Activated T-helper 1 cell treated with anti-CD3 and anti-CD28 coated beads, Interleukin-12 subunit alpha, Interleukin-12 subunit beta, Interleukin-2, Interleukin-4 antibody, amounts not matched to agents 30 ng/mL and 10 ng/mL and 1 ng/mL, durations not matched to agents 14 hours and 24 hours and 36 hours (primary cell): ENCODE measurements at regions of chr1 and their contacts with region 1.

Region 1: DNA sequence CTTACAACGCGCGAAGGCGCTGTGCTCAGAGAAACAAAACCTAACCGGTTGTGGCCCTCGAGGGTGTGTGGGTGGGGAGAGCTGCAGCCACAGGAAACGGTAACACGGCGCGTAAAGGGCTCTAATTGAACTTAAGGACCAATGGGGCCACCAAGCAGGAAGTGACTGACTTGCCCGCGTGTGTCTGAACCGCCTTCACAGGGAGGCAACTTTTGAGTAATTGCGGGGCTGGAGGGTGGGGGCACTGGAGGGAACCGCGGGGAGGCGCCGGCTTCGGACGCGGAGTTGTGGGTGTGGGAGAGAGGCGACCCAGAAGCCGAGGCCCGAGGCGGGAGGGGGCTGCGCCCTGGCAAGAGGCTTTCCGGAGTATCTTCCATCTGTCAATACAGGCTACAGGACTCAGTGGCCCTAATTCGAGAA is 577 bp upstream of the PNRC2 start:
- DNase-seq: peak; percentile 90
- H3K4me3 Mint-ChIP-seq: peak overlapping the region; percentile 99
- H3K27ac Mint-ChIP-seq: peak overlapping the region; percentile 100
- H3K4me1 Mint-ChIP-seq: peaks cover 67% of the 10 kb centered on the region
- H3K27me3 Mint-ChIP-seq: no peaks in the 10 kb centered on the region

Region 2: GRCh38 chr1:23800400-23801337 is 158.4 kb before region 1 on chr1 and contains the start of gene GALE:
- intact Hi-C with region 1: loop called (anchors 1 kb)
- DNase-seq: peak; percentile 93
- H3K4me3 Mint-ChIP-seq: peak within 1 kb of the TSS; percentile 97
- H3K27ac Mint-ChIP-seq: peak within 1 kb of the TSS; percentile 88
- H3K4me1 Mint-ChIP-seq: peaks cover 13% of the 10 kb centered on the region
- H3K27me3 Mint-ChIP-seq: peaks cover 2% of the 10 kb centered on the region
- total RNA-seq, gene GALE: 62.4 and 63.4 TPM in 2 replicates

Region 3: DNA sequence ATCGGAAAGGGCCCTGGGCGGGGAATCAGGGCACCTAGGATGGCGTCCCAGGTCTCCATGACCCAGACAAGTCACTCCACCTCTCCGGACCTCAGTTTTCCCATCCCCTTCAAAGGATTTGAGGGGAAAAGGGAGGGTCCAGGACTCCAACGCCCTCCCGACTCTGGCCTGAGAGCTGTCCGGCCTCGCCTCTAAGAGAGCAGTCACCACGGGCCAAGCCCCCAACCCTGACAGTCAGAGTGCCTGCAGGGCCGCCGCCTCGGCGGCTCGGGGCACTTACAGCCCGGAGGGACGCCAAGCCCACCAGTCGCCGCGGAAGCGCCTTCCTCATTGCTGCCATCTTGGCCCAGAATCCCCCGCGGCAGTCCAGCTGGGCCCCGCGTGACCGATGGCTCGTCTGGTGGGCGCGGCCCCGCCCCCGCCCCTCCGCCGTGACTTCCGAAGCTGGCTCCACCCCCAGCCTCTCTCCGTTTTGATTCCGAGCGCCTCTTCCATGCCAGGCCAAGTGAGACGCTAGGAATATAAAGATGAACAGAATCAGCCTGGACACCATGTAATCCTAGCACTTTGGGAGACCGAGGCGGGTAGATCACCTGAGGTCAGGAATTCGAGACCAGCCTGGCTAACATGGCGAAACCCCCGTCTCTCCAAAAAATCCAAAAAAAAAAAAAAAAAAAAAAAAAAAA is 133.8 kb before region 1 on chr1 and contains the start of gene HMGCL:
- intact Hi-C with region 1: loop called (anchors 1 kb)
- DNase-seq: peak; percentile 81
- H3K4me3 Mint-ChIP-seq: peak within 1 kb of the TSS; percentile 94
- H3K27ac Mint-ChIP-seq: peak within 1 kb of the TSS; percentile 89
- H3K4me1 Mint-ChIP-seq: peaks cover 15% of the 10 kb centered on the region
- H3K27me3 Mint-ChIP-seq: no peaks in the 10 kb centered on the region
- total RNA-seq, gene HMGCL: 18.5 and 19.9 TPM in 2 replicates

Region 4: DNA sequence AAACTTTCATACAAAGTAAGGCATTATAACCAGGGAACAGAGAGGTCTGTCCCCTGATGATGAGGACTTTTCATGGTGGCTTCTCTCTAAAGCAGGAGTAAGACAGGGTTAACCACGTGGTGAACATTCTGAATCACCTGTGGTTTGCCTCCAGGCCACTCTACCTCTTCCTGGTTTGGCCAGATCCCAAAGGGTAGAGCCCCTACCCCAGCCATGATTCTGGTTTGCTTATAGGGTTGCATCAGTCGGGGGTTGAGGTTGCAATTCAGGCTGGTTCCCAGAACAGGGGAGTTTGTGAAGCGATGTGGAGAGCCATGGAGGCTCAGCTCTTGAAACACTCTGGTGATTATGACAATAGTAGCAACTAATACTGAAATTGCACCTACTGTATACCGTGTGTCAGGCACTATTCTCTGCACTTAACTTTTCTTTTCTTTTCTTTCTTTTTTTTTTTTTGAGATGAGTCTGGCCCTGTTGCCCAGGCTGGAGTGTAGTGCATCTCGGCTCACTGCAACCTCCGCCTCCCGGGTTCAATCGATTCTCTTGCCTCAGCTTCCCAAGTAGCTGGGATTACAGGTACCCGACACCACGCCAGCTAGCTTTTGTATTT is 54.2 kb before region 1 on chr1:
- intact Hi-C with region 1: loop called (anchors 2 kb)
- DNase-seq: peak; percentile 17
- H3K4me3 Mint-ChIP-seq: no peak overlapping the region
- H3K27ac Mint-ChIP-seq: no peak overlapping the region
- H3K4me1 Mint-ChIP-seq: peaks cover 33% of the 10 kb centered on the region
- H3K27me3 Mint-ChIP-seq: peaks cover 49% of the 10 kb centered on the region

Region 5: GRCh38 chr1:23979878-23980724 is 21.1 kb after region 1 on chr1 and contains the start of gene SRSF10:
- intact Hi-C with region 1: loop called (anchors 1 kb)
- DNase-seq: peak; percentile 98
- H3K4me3 Mint-ChIP-seq: peak within 1 kb of the TSS; percentile 97
- H3K27ac Mint-ChIP-seq: peak within 1 kb of the TSS; percentile 97
- H3K4me1 Mint-ChIP-seq: peaks cover 47% of the 10 kb centered on the region
- H3K27me3 Mint-ChIP-seq: no peaks in the 10 kb centered on the region
- total RNA-seq, gene SRSF10: 238 and 243 TPM in 2 replicates

Region 6: GRCh38 chr1:25239681-25240541 is 1280.9 kb after region 1 on chr1:
- intact Hi-C with region 1: loop called (anchors 10 kb)
- DNase-seq: peak; percentile 88
- H3K4me3 Mint-ChIP-seq: peak overlapping the region; percentile 83
- H3K27ac Mint-ChIP-seq: peak overlapping the region; percentile 91
- H3K4me1 Mint-ChIP-seq: peaks cover 63% of the 10 kb centered on the region
- H3K27me3 Mint-ChIP-seq: no peaks in the 10 kb centered on the region